A549 (cell line): ENCODE measurements at regions of chr15 and their contacts with region 1.

Region 1: DNA sequence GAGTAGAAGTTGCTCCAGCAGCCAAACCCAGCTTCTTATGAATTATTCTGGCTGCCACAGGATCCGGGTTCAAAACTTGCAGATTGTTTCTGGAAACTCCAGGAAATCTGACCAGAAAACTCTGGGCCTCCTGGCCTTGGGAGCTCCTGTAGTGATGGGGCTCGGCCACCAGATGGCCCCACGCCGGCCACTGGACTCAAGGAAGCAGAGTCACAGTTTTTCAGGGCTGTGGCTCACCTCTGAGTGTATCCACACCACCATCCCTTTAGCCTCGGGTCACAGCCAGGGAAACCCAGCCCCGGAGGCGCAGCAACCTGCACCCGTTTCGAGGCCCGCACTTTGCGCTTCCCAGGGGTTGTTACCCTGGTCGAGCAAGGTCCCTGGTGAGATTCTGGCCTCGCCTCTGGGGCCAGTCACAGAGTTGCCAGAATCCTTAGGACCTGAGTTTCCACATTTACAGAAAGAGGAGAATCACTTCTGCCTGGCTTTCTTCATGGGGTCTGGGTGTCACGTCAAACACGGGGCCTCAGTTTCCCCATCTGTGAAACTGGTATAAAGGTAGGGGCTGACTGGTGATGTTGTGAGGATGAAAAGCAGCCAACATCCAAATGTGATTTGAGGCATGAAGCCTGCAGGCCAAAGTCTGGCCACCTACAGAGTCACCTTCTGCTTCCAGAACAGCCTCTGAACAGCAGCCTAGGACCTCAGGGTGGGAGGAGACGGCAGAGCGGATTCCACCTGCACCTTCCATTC is 53.5 kb upstream of the LCTL start:
- DNase-seq: peak; percentile 83 to 92
- ATAC-seq: peak; percentile 87 to 95
- H3K4me3 ChIP-seq: no peak overlapping the region
- H3K27ac ChIP-seq: peak overlapping the region; percentile 69 to 81
- H3K4me1 ChIP-seq: peaks cover 18% of the 10 kb centered on the region
- CTCF ChIP-seq: peak; percentile 97
- EP300 ChIP-seq: no peak
- POLR2A ChIP-seq: no peak
- RAD21 ChIP-seq: peak; percentile 85 to 86

Region 2: DNA sequence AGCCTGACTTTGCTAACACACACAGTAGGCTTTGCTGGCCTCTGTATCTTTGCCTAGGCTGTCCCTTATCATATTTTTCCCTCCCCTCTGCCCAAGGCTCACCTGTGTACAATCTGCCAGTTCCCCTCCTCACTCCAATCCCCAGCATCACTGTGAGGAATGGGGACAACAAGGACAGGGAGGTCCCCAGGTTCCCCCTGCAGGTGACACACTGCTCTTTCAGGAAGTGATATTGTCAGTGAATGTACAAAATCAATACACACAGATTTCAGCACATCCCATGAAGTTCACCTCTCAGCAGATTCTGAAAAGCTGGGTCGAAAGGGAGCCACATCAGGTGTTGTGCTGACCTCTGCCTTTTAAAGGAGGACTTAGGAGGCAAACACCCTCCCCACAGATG is 572.6 kb before region 1 on chr15:
- CTCF ChIA-PET with region 1: no interaction called
- POLR2A ChIA-PET with region 1: no interaction called
- DNase-seq: no peak
- ATAC-seq: peak in 1 of 2 experiments; percentile 25; a peak in 2 of 6 replicates
- H3K4me3 ChIP-seq: no peak overlapping the region
- H3K27ac ChIP-seq: no peak overlapping the region
- H3K4me1 ChIP-seq: no peaks in the 10 kb centered on the region
- CTCF ChIP-seq: peak; percentile 24; the same call in 2 of the 3 replicates
- EP300 ChIP-seq: no peak
- POLR2A ChIP-seq: no peak
- RAD21 ChIP-seq: peak; percentile 29 to 33; a peak in 3 of 5 replicates

Region 3: GRCh38 chr15:66261056-66261455 is 358.3 kb before region 1 on chr15:
- CTCF ChIA-PET with region 1: no interaction called
- POLR2A ChIA-PET with region 1: no interaction called
- DNase-seq: no peak
- ATAC-seq: no peak
- H3K4me3 ChIP-seq: no peak overlapping the region
- H3K27ac ChIP-seq: no peak overlapping the region
- H3K4me1 ChIP-seq: no peaks in the 10 kb centered on the region
- CTCF ChIP-seq: no peak
- EP300 ChIP-seq: no peak
- POLR2A ChIP-seq: no peak
- RAD21 ChIP-seq: no peak

Region 4: GRCh38 chr15:66424963-66425612 is 194.2 kb before region 1 on chr15:
- CTCF ChIA-PET with region 1: no interaction called
- POLR2A ChIA-PET with region 1: no interaction called
- DNase-seq: no peak
- ATAC-seq: no peak
- H3K4me3 ChIP-seq: no peak overlapping the region
- H3K27ac ChIP-seq: no peak overlapping the region
- H3K4me1 ChIP-seq: no peaks in the 10 kb centered on the region
- CTCF ChIP-seq: no peak
- EP300 ChIP-seq: no peak
- POLR2A ChIP-seq: no peak
- RAD21 ChIP-seq: no peak

Region 5: GRCh38 chr15:66603301-66604179 is 15.8 kb before region 1 on chr15:
- CTCF ChIA-PET with region 1: interaction called, 119 read pairs
- POLR2A ChIA-PET with region 1: no interaction called
- DNase-seq: peak; percentile 61 to 86
- ATAC-seq: peak; percentile 80 to 97
- H3K4me3 ChIP-seq: no peak overlapping the region
- H3K27ac ChIP-seq: no peak overlapping the region
- H3K4me1 ChIP-seq: no peaks in the 10 kb centered on the region
- CTCF ChIP-seq: peak; percentile 95
- EP300 ChIP-seq: no peak
- POLR2A ChIP-seq: no peak
- RAD21 ChIP-seq: peak; percentile 92

Region 6: DNA sequence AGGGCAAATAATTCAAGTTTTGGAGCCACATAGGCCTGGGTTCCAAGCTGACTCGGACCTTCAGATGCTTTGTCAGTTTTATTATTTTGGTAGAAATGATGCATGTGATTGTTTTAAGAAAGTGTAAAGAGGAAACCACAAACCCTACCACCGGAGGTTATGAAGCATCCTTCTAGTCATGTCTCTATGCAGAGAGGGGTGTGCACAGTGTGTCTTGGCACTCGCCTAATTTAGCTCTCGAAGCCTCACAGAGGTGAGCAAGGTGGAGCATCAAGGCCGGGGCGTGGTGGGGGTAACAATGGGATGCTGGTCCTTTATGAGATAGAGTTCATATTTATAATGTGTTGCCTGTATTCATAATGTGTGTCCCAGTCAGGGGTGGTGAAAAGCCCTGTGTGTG is 19.1 kb after region 1 on chr15:
- CTCF ChIA-PET with region 1: interaction called, 67 read pairs
- POLR2A ChIA-PET with region 1: no interaction called
- DNase-seq: no peak
- ATAC-seq: no peak
- H3K4me3 ChIP-seq: no peak overlapping the region
- H3K27ac ChIP-seq: no peak overlapping the region
- H3K4me1 ChIP-seq: no peaks in the 10 kb centered on the region
- CTCF ChIP-seq: no peak
- EP300 ChIP-seq: no peak
- POLR2A ChIP-seq: no peak
- RAD21 ChIP-seq: no peak

Region 7: GRCh38 chr15:66685638-66686150 is 66.4 kb after region 1 on chr15:
- CTCF ChIA-PET with region 1: interaction called, 28 read pairs
- POLR2A ChIA-PET with region 1: no interaction called
- DNase-seq: no peak
- ATAC-seq: peak; percentile 51 to 78; a peak in 4 of 6 replicates
- H3K4me3 ChIP-seq: no peak overlapping the region
- H3K27ac ChIP-seq: no peak overlapping the region
- H3K4me1 ChIP-seq: no peaks in the 10 kb centered on the region
- CTCF ChIP-seq: peak; percentile 58
- EP300 ChIP-seq: no peak
- POLR2A ChIP-seq: no peak
- RAD21 ChIP-seq: peak; percentile 44

Region 8: DNA sequence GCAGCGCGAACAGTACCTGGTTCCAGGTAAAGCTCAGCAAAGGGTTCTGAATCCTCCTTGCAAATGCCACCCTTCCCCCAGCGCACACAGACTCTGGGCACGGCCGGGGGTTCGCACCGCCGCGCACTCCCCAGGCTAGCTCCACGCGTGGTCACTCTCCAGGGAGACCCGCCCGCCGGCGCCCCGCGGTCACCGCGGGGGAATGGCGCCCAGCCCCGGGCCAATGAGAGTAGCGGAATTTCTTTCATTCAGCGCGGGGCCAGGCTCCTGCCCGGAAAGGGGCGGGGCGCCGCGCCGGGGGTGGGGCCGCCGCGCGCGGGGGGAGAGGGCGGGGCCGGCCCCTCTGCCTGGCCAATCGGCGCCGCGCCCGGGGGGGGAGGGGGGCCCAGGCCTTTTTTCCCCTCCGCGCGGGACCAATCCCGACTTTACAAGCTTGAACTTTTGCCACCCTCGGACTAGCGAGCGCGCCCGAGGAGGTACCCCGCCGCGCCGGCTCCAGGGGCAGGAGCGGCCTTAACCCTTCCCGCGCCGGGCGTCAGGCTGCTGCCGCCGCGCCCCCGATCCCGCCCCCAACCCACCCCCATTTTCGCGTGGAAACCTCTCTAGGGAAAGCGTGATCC is 81.6 kb after region 1 on chr15:
- CTCF ChIA-PET with region 1: interaction called, 98 read pairs
- POLR2A ChIA-PET with region 1: interaction called, 9 read pairs
- DNase-seq: peak; percentile 92 to 98
- ATAC-seq: peak; percentile 62 to 73
- H3K4me3 ChIP-seq: peak overlapping the region; percentile 90
- H3K27ac ChIP-seq: peak overlapping the region; percentile 95
- H3K4me1 ChIP-seq: peaks cover 35% of the 10 kb centered on the region
- CTCF ChIP-seq: no peak
- EP300 ChIP-seq: peak in 1 of 2 experiments; percentile 58; a peak in 1 of 5 replicates
- POLR2A ChIP-seq: peak; percentile 62
- RAD21 ChIP-seq: peak in 1 of 2 experiments; percentile 26; a peak in 2 of 5 replicates

Region 9: GRCh38 chr15:66780172-66780972 is 161.0 kb after region 1 on chr15:
- CTCF ChIA-PET with region 1: interaction called, 53 read pairs
- POLR2A ChIA-PET with region 1: no interaction called
- DNase-seq: peak; percentile 44 to 61
- ATAC-seq: peak; percentile 35 to 57; a peak in 4 of 6 replicates
- H3K4me3 ChIP-seq: no peak overlapping the region
- H3K27ac ChIP-seq: peak overlapping the region; percentile 60 to 94
- H3K4me1 ChIP-seq: peaks cover 55% of the 10 kb centered on the region
- CTCF ChIP-seq: no peak
- EP300 ChIP-seq: no peak
- POLR2A ChIP-seq: no peak
- RAD21 ChIP-seq: no peak

Region 10: GRCh38 chr15:66862878-66863335 is 243.6 kb after region 1 on chr15:
- CTCF ChIA-PET with region 1: interaction called, 27 read pairs
- POLR2A ChIA-PET with region 1: no interaction called
- DNase-seq: peak; percentile 87 to 90
- ATAC-seq: peak; percentile 85 to 97
- H3K4me3 ChIP-seq: no peak overlapping the region
- H3K27ac ChIP-seq: peak overlapping the region; percentile 1 to 66; a peak in 4 of 6 replicates
- H3K4me1 ChIP-seq: peaks cover 17% of the 10 kb centered on the region
- CTCF ChIP-seq: peak; percentile 98
- EP300 ChIP-seq: no peak
- POLR2A ChIP-seq: no peak
- RAD21 ChIP-seq: peak; percentile 83 to 87